ENCODE measurements at regions of chr6 and their contacts with region 1.

Region 1: DNA sequence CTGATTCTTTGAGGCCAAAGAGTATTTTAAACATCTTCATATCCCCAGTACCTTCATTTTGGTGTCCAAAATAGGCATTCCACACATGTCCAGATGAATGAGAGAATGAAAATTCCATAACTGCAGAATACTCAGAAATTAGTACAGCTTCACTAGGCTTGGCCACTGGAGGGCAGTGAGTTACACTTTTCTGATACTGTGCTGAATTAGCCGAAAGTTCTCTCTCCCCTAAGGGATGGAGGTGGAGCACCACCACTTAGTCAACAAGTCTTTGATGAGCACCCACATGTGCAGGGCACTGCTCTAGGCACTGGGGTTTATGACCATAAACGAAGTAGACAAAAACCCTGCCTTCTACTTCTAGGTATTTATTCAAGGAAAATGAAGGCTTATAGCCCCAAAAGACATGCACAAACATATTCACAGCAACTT is 46.0 kb upstream of the TMEM217 start:
- DNase-seq: peak; percentile 32
- ATAC-seq: peak; percentile 84
- H3K4me3 Mint-ChIP-seq: no peak overlapping the region
- H3K27ac Mint-ChIP-seq: no peak overlapping the region
- H3K4me1 Mint-ChIP-seq: no peaks in the 10 kb centered on the region
- H3K27me3 Mint-ChIP-seq: no peaks in the 10 kb centered on the region
- CTCF ChIP-seq: peak; percentile 65

Region 2: GRCh38 chr6:37289931-37290330 is 14.0 kb before region 1 on chr6:
- CTCF ChIA-PET with region 1: interaction called, 12 read pairs
- POLR2A ChIA-PET with region 1: no interaction called
- intact Hi-C with region 1: no loop called
- DNase-seq: peak; percentile 43
- ATAC-seq: peak; percentile 86
- H3K4me3 Mint-ChIP-seq: no peak overlapping the region
- H3K27ac Mint-ChIP-seq: peak overlapping the region; percentile 44
- H3K4me1 Mint-ChIP-seq: peaks cover 20% of the 10 kb centered on the region
- H3K27me3 Mint-ChIP-seq: no peaks in the 10 kb centered on the region
- CTCF ChIP-seq: no peak